Esophagus muscularis mucosa (tissue), 4 donors: ENCODE measurements at regions of chr1 and their contacts with region 1.

Region 1: DNA sequence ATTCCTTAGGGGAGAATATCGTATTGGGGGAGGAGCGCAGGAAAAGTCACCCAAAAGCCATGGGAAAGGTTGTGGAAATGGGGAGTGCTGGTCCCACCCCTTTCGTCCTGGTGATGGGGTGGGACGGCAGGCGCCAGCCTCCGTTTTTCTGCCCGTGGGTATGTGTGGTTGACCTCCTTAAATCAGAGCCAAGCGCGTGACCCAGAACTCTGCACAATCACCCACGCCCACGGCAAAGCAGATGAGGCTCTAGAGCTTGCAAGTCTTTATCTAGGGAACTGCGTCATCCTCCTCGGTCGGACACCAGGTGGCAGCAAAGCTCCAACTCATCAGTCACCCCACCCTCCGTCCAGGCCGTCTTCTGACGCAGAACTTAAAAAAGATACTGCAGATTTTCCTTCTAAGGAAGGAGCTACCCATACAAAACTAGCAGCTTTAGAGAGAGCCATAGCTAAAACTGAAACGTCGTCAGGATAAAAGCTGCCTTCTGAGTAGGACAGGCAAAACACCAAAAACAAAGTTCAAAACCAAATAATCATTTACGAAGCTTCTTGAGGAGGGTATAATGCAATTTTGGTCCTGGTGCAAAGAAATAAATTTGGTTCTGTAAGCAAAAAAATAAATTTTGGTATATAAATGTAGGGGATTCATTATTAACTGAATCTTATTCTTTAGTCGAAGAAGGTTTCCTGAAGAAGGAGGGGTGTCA is 62.0 kb downstream of the TBX19 start:
- DNase-seq: peak; percentile 97
- H3K4me3 ChIP-seq: peak overlapping the region; percentile 19 to 49 (median 37)
- H3K27ac ChIP-seq: peak overlapping the region; percentile 67 to 70 (median 68)
- H3K4me1 ChIP-seq: peaks cover 12 to 27% (median 25%) of the 10 kb centered on the region in 4 donors
- H3K27me3 ChIP-seq: no peaks in the 10 kb centered on the region
- CTCF ChIP-seq: peak; percentile 81 to 90 (median 81)
- EP300 ChIP-seq: no peak
- POLR2A ChIP-seq: no peak

Region 2: GRCh38 chr1:168428063-168428731 is 85.5 kb after region 1 on chr1:
- intact Hi-C with region 1: loop called (anchors 5 kb)
- DNase-seq: no peak
- H3K4me3 ChIP-seq: no peak overlapping the region
- H3K27ac ChIP-seq: peak overlapping the region; percentile 75 to 83 (median 79)
- H3K4me1 ChIP-seq: peaks cover 41 to 61% (median 52%) of the 10 kb centered on the region in 4 donors
- H3K27me3 ChIP-seq: no peaks in the 10 kb centered on the region
- CTCF ChIP-seq: peak in 1 of 3 experiments; percentile 4
- EP300 ChIP-seq: no peak
- POLR2A ChIP-seq: no peak

Region 3: DNA sequence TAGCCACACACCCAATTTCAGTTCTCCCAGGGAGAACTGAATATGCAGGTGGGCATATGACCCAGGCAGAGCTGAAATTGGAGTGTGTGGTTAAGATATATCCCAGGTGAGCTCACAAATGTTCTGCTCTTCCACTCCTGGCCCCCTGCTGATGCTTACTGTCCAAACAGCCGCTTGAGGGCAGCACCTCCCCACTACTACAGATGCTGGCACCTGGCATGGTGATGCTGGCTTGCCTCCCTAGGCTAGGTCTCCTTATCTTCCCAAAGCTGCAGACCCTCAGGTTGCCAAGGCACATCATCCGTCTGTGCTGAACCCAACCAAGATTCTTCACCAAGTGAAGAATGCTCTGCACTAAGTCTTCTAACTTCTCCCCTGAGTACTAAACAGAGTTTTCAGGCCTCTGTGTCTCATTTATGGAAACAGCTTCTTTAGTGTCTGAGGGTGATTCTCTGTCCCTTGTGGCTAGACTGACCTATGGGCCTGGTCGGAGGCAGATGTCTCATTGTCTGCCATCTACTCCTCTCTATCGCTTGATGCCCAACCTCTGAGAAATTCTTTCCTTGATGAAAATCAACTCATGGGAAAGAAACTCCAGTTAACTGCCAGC is 260.9 kb after region 1 on chr1:
- intact Hi-C with region 1: loop called (anchors 10 kb)
- DNase-seq: peak; percentile 91
- H3K4me3 ChIP-seq: no peak overlapping the region
- H3K27ac ChIP-seq: no peak overlapping the region
- H3K4me1 ChIP-seq: peaks cover 15 to 46% (median 31%) of the 10 kb centered on the region in 4 donors
- H3K27me3 ChIP-seq: no peaks in the 10 kb centered on the region
- CTCF ChIP-seq: peak; percentile 79 to 88 (median 87)
- EP300 ChIP-seq: no peak
- POLR2A ChIP-seq: no peak

Region 4: GRCh38 chr1:168783458-168784230 is 440.9 kb after region 1 on chr1:
- intact Hi-C with region 1: loop called (anchors 10 kb)
- DNase-seq: no peak
- H3K4me3 ChIP-seq: no peak overlapping the region
- H3K27ac ChIP-seq: peak overlapping the region; percentile 43 to 60 (median 56)
- H3K4me1 ChIP-seq: peaks cover 3 to 17% (median 9%) of the 10 kb centered on the region in 4 donors
- H3K27me3 ChIP-seq: no peaks in the 10 kb centered on the region
- CTCF ChIP-seq: no peak
- EP300 ChIP-seq: no peak
- POLR2A ChIP-seq: no peak

Region 5: DNA sequence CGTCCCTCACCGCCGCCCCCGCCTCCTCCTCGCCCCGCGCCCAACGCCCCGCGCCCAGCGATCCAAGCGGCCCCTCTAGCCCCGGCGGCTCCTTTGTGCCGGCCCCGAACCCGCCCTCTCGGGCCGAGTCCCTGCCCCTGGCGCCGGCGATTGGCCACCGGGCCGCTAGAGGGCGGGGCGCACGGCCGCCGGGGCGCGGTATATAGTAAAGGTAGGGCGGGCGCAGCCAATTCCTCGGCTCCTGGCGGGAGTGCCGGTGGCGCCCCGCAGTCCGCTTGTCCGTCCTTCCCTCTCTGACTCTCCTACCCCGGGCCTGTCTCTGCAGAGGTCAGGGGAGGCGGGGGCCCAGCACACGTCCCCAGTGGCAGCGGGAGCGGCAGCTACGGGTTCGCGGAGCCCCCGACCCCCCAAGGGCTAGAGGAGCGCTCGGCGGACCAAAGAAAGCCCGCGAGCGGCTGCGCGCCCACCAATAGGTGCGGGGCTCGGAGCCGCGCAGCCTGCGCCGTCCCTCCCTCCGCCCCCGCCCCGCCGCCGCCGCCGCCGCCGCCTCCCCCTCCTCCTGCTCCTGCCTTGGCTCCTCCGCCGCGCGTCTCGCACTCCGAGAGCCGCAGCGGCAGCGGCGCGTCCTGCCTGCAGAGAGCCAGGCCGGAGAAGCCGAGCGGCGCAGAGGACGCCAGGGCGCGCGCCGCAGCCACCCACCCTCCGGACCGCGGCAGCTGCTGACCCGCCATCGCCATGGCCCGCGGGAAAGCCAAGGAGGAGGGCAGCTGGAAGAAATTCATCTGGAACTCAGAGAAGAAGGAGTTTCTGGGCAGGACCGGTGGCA is 763.6 kb after region 1 on chr1 and contains the start of gene ATP1B1:
- intact Hi-C with region 1: loop called (anchors 10 kb)
- DNase-seq: no peak
- H3K4me3 ChIP-seq: peak within 1 kb of the TSS; percentile 68 to 98 (median 93)
- H3K27ac ChIP-seq: peak within 1 kb of the TSS; percentile 90 to 98 (median 96)
- H3K4me1 ChIP-seq: peaks cover 38 to 70% (median 66%) of the 10 kb centered on the region in 4 donors
- H3K27me3 ChIP-seq: no peaks in the 10 kb centered on the region
- CTCF ChIP-seq: peak; percentile 69 to 73 (median 72)
- EP300 ChIP-seq: no peak
- POLR2A ChIP-seq: peak; percentile 88
- total RNA-seq, gene ATP1B1: 69.4 to 88.6 (median 78.3) TPM

Region 6: DNA sequence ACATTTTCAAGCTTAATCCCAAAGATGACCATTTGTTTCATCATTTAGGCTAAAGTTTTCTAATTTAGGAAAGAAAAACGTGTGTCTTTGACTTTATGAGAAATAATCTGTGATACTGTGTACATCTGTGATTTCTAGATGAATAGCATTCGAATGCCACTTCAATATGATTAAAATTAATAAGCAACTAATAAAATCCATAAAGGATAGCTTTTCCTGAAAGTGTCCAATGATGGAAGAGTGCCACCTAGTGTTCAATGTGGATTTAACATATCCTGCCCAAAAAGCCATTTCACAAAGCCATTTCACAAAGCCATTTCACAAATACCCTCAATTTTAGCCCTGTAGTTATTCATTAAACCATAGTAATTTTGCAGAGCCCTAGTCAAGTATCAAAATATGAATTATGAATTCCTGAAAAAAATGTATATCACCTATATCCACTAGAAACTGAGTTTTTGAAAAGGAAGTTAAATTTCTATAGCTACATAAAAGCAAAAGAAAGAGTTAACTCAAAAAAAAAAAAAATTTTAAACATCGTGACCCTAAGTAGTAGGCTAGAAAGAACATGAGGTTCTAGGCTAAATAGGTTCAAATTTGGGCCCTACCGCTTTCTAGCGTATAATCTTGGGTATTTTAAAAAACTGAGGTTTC is 1005.8 kb after region 1 on chr1:
- intact Hi-C with region 1: loop called (anchors 5 kb)
- DNase-seq: no peak
- H3K4me3 ChIP-seq: no peak overlapping the region
- H3K27ac ChIP-seq: no peak overlapping the region
- H3K4me1 ChIP-seq: no peaks in the 10 kb centered on the region
- H3K27me3 ChIP-seq: no peaks in the 10 kb centered on the region
- CTCF ChIP-seq: peak; percentile 73 to 83 (median 78)
- EP300 ChIP-seq: no peak
- POLR2A ChIP-seq: no peak